MCF 10A (cell line): ENCODE measurements at regions of chr15 and their contacts with region 1.

Region 1: GRCh38 chr15:89087830-89088604 is at the start of gene ABHD2:
- DNase-seq: peak; percentile 100
- H3K4me3 Mint-ChIP-seq: no peak within 1 kb of the TSS
- H3K27ac Mint-ChIP-seq: peak within 1 kb of the TSS; percentile 97
- H3K4me1 Mint-ChIP-seq: peaks cover 22% of the 10 kb centered on the region
- H3K27me3 Mint-ChIP-seq: no peaks in the 10 kb centered on the region
- CTCF ChIP-seq: no peak
- total RNA-seq, gene ABHD2: 47.7 and 55.9 TPM in 2 replicates

Region 2: DNA sequence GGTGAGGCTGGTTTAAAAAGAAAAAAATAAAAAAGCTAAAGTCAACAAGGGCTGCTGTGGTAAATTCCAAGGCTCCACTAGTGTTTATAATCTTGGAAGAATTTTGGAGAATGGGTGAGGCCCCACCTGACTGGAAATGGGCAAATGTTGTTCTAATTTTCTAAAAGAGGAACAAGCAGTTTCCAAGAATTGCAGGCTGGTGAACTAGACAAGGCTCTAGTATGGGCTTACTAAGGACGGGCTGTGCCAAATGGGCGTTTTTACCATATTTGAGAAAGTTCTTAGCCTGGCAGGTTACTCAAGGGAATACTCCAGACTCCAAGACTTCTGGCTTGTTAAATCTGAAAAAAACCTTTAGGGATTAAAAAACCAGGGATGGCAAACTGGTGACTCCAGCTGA is 66.8 kb before region 1 on chr15:
- CTCF ChIA-PET with region 1: no interaction called
- POLR2A ChIA-PET with region 1: no interaction called
- intact Hi-C with region 1: no loop called
- DNase-seq: no peak
- H3K4me3 Mint-ChIP-seq: no peak overlapping the region
- H3K27ac Mint-ChIP-seq: no peak overlapping the region
- H3K4me1 Mint-ChIP-seq: peaks cover 14% of the 10 kb centered on the region
- H3K27me3 Mint-ChIP-seq: no peaks in the 10 kb centered on the region
- CTCF ChIP-seq: no peak

Region 3: GRCh38 chr15:89075846-89076245 is 12.2 kb before region 1 on chr15:
- CTCF ChIA-PET with region 1: interaction called, 3 read pairs
- POLR2A ChIA-PET with region 1: interaction called, 18 read pairs
- intact Hi-C with region 1: no loop called
- DNase-seq: no peak
- H3K4me3 Mint-ChIP-seq: no peak overlapping the region
- H3K27ac Mint-ChIP-seq: no peak overlapping the region
- H3K4me1 Mint-ChIP-seq: peaks cover 8% of the 10 kb centered on the region
- H3K27me3 Mint-ChIP-seq: no peaks in the 10 kb centered on the region
- CTCF ChIP-seq: no peak

Region 4: DNA sequence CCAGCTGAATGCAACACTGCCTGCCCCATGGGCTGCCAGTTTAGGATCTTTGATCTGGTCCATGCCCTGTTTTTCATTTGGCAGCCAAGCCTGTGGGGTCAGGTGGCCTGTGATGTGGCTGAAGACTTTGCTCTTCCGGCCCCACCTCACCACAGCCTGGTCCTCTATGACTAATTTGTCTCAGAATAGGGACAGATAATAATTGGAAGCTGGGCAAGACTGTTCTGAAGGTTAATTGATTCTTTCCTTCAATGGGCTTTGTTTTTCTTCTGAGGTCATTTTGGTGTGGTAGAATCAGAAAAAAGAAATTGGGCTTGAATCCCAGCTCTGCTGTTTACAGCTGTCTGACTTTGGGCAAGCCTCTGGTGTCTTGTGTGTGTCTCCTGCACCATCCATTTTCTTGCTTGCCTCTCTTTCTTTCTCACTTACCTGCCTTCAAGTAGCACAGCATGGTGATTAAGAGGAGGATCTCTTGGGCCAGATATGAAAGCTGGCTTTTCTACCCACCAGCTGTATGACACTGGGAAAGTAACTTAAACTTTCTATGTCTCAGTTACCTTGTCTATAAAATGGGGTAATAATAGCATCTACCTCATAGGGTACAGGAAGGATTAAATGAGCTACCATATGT is 24.4 kb after region 1 on chr15:
- CTCF ChIA-PET with region 1: interaction called, 4 read pairs
- POLR2A ChIA-PET with region 1: interaction called, 121 read pairs
- intact Hi-C with region 1: no loop called
- DNase-seq: peak; percentile 49
- H3K4me3 Mint-ChIP-seq: no peak overlapping the region
- H3K27ac Mint-ChIP-seq: peak overlapping the region; percentile 69
- H3K4me1 Mint-ChIP-seq: peaks cover 20% of the 10 kb centered on the region
- H3K27me3 Mint-ChIP-seq: no peaks in the 10 kb centered on the region
- CTCF ChIP-seq: no peak

Region 5: DNA sequence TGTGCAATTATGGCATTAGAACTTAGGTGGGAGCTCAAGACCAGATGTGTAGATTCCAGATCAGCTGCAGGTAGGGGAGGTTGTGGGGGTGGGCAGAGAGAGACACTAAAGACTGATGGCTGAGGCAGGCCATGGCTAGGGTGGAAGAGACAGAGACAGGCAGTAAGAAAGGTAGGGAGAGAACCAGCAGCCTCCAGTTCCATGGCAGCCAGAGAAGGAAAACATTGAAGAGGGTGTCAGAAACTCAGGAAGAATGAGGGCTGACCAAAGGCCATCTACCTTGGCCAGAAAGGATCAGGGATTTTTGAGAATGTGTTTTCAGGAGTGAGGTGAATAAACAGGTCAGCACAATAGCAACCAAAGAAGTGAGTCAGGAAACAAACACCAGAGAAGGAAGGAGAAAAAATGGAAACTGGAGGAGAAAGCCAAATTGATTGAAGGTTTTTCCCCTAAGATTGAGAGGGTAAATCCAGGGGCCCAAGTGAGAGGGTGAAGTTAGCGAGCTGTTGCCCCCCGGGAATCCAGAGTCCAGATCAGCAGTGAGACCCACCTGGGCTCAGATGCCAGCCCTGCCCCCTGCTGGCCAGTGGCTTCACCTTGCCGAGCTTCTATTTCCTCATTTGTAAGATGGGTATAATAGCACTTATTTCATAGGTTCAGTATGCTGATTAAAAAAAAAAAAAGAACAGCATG is 41.3 kb after region 1 on chr15:
- CTCF ChIA-PET with region 1: interaction called, 40 read pairs
- POLR2A ChIA-PET with region 1: interaction called, 121 read pairs
- intact Hi-C with region 1: loop called (anchors 1 kb)
- DNase-seq: peak; percentile 60
- H3K4me3 Mint-ChIP-seq: no peak overlapping the region
- H3K27ac Mint-ChIP-seq: no peak overlapping the region
- H3K4me1 Mint-ChIP-seq: peaks cover 5% of the 10 kb centered on the region
- H3K27me3 Mint-ChIP-seq: no peaks in the 10 kb centered on the region
- CTCF ChIP-seq: peak; percentile 65